Mucosa of descending colon (tissue), 3 donors: ENCODE measurements at regions of chr9 and their contacts with region 1.

Region 1: DNA sequence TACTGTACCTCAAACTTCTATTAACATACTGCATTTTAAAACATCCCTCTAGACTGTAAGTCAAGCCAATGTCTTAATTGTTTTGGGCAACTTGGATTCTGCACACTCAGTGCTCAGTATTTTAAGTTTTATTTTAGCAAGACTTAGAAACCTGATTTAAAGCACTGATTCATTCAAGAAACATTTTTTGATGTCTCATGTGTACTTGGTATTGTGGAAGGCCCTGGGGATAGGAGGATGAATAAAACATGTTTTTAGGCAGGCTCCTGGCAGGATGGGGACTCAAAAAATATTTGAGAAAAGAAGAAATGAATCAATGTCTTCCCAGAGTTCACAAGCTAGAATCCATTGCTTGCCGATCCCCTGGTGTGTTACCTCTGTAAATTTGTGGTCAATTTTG is 334.0 kb upstream of the PUM3 start:
- DNase-seq: no peak
- ATAC-seq: no peak
- H3K4me3 ChIP-seq: no peak overlapping the region
- H3K4me1 ChIP-seq: peaks cover 25% of the 10 kb centered on the region
- CTCF ChIP-seq: no peak

Region 2: DNA sequence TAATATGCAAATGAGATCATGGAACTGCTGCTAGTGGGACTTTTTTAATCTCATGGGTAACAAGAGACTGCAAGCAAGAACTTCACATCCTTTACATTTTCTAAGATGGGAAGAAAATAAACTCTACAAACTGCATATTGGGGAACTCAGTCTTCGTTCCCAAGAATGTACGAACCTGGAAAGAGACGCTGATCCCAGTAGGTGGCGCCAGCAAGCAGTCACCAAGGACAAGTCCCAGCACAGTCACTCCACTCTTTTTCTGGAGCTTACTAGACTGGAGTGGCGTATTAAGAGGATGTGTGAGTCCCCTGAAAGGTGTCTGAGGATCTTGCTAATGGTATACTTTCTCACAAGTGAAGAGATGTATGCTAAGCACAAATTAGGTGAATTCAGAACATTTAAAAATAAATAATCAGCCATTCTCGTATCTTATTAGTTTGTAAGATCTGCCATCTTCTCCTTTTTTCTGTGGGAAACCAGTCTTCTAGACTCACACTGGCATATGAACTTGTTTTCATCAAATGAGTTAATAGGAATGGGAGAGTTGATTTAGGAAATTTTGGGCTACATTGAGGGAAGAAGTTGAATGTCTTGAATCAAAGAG is 318.1 kb before region 1 on chr9:
- intact Hi-C with region 1: loop called in 1 of 2 experiments (anchors 10 kb)
- DNase-seq: peak in 2 of 3 donors; percentile 67 to 77
- ATAC-seq: peak; percentile 64
- H3K4me3 ChIP-seq: no peak overlapping the region
- H3K4me1 ChIP-seq: no peaks in the 10 kb centered on the region
- CTCF ChIP-seq: peak; percentile 32